MCF 10A (cell line): ENCODE measurements at regions of chr22 and their contacts with region 1.

Region 1: DNA sequence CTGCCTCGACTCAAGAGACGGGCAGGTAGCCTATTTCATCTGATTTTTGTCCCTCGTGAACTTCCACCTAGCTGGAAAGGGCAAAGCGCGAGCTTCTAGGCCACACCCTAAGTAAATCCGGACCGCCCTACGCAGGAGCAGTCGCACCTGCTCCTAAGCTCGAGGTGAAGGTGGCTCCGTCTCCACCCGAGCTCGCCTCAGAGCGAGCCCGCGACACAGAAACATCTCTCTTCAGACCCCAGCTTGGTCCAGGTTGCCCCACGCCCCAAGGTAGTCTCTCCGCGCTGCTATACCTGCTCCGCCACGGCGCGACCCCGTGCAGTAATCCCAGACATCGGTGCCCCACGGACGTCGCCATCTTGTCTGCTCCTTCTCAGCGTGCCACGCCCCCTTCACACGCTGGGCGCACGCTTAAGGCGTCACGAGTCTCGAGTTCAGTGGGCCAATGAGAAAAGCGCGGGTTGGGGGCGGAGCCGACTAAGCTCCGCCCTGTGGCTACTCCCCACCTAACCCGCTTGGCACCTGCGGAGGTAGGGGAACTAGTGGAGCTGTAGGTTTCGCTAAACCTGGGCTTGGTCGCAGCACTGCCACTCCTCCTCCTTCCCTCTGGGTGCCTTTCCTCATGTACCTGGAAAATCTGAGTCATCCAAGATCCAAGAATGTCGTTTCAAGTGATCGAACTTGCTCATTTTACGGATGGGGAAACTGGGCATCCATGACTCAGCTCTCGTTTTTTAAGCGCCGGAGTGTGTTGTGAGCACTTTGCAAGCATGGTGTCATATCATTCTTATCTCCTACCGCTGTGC is at the start of gene PISD:
- DNase-seq: peak; percentile 98
- H3K4me3 Mint-ChIP-seq: peak within 1 kb of the TSS; percentile 100
- H3K27ac Mint-ChIP-seq: peak within 1 kb of the TSS; percentile 100
- H3K4me1 Mint-ChIP-seq: peaks cover 19% of the 10 kb centered on the region
- H3K27me3 Mint-ChIP-seq: no peaks in the 10 kb centered on the region
- CTCF ChIP-seq: no peak
- total RNA-seq, gene PISD: 38.3 and 48.2 TPM in 2 replicates

Region 2: GRCh38 chr22:31439808-31440207 is 222.2 kb before region 1 on chr22:
- CTCF ChIA-PET with region 1: no interaction called
- POLR2A ChIA-PET with region 1: no interaction called
- intact Hi-C with region 1: no loop called
- DNase-seq: no peak
- H3K4me3 Mint-ChIP-seq: no peak overlapping the region
- H3K27ac Mint-ChIP-seq: no peak overlapping the region
- H3K4me1 Mint-ChIP-seq: no peaks in the 10 kb centered on the region
- H3K27me3 Mint-ChIP-seq: no peaks in the 10 kb centered on the region
- CTCF ChIP-seq: no peak

Region 3: GRCh38 chr22:31630331-31631329 is 31.4 kb before region 1 on chr22:
- CTCF ChIA-PET with region 1: interaction called, 5 read pairs
- POLR2A ChIA-PET with region 1: interaction called, 32 read pairs
- intact Hi-C with region 1: no loop called
- DNase-seq: peak; percentile 70
- H3K4me3 Mint-ChIP-seq: peak overlapping the region; percentile 75
- H3K27ac Mint-ChIP-seq: no peak overlapping the region
- H3K4me1 Mint-ChIP-seq: peaks cover 19% of the 10 kb centered on the region
- H3K27me3 Mint-ChIP-seq: no peaks in the 10 kb centered on the region
- CTCF ChIP-seq: no peak

Region 4: GRCh38 chr22:31646186-31647089 is 15.6 kb before region 1 on chr22:
- CTCF ChIA-PET with region 1: interaction called, 4 read pairs
- POLR2A ChIA-PET with region 1: interaction called, 107 read pairs
- intact Hi-C with region 1: no loop called
- DNase-seq: peak; percentile 87
- H3K4me3 Mint-ChIP-seq: peak overlapping the region; percentile 38
- H3K27ac Mint-ChIP-seq: peak overlapping the region; percentile 91
- H3K4me1 Mint-ChIP-seq: peaks cover 15% of the 10 kb centered on the region
- H3K27me3 Mint-ChIP-seq: no peaks in the 10 kb centered on the region
- CTCF ChIP-seq: no peak

Region 5: DNA sequence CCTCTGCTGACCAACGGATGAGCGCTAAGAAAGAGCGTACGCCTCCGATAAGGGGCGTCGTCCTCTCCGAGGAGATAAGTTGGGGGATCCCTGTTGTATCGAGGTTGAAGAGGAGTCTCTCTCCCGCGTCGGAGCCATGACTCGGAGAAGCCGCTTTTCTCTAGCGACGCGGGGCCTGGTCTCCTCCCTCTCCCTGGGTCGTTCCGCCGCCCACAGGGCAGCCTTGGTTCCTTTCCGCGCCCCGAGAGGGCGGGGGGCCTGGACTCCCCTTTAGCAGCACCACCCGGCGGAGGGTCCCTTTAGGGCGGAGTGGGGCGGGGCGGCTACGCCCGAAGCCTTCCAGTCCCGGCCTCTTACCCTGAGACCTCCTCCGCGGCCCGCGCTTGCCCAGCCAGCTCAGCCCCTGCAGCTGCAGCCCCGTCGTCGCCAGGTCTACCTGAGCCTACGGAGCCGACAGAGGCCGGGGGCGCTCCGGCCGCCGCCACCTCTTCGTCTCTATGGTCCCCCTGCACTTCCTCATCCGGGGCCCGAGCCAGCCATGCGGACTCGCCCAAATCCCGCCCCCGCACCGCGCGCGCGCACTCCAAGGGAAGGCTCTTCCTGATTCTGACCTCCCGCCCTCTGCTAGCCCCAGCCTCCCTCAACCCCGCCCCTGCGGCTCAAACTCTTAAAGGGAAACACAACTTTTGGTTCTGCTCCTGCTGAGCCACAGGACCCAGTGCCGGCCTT is 87.7 kb after region 1 on chr22 and contains the start of gene PRR14L:
- CTCF ChIA-PET with region 1: interaction called, 3 read pairs
- POLR2A ChIA-PET with region 1: interaction called, 80 read pairs
- intact Hi-C with region 1: loop called (anchors 5 kb)
- DNase-seq: peak; percentile 97
- H3K4me3 Mint-ChIP-seq: peak within 1 kb of the TSS; percentile 80
- H3K27ac Mint-ChIP-seq: peak within 1 kb of the TSS; percentile 90
- H3K4me1 Mint-ChIP-seq: peaks cover 32% of the 10 kb centered on the region
- H3K27me3 Mint-ChIP-seq: no peaks in the 10 kb centered on the region
- CTCF ChIP-seq: no peak
- total RNA-seq, gene PRR14L: 37.4 and 55.0 TPM in 2 replicates

Region 6: DNA sequence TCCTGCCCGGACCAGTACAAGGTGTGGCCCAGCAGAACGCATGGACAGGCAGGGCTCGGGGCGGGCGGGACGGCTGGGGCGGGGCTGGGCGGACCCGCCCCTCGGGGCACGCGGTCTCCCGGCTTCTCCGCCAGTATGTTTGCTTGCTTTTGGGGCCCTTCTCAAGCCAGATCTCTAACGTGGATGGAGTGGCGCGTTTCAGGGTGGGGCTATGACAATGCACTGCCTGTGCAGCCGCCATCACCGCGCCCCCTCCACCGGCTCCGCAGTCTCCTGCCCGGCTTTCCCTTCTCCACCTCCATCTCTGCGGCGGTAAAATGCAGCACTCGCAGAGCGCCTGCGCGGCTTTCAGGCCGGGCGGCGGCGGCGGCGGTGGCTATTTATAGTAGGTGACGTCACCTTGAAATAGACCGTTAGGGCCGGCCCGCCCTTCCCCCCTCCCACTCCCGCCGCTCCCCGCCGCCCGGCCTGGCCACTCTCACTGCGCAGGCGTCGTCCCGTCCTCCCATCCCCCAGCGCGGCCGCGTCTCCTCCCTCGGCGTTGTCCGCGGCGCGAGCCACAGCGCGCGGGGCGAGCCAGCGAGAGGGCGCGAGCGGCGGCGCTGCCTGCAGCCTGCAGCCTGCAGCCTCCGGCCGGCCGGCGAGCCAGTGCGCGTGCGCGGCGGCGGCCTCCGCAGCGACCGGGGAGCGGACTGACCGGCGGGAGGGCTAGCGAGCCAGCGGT is 282.1 kb after region 1 on chr22 and contains the start of gene YWHAH:
- CTCF ChIA-PET with region 1: interaction called, 9 read pairs
- POLR2A ChIA-PET with region 1: interaction called, 31 read pairs
- intact Hi-C with region 1: loop called (anchors 1 kb)
- DNase-seq: peak; percentile 92
- H3K4me3 Mint-ChIP-seq: no peak within 1 kb of the TSS
- H3K27ac Mint-ChIP-seq: peak within 1 kb of the TSS; percentile 55
- H3K4me1 Mint-ChIP-seq: peaks cover 6% of the 10 kb centered on the region
- H3K27me3 Mint-ChIP-seq: no peaks in the 10 kb centered on the region
- CTCF ChIP-seq: no peak
- total RNA-seq, gene YWHAH: 64.2 and 79.9 TPM in 2 replicates

Region 7: DNA sequence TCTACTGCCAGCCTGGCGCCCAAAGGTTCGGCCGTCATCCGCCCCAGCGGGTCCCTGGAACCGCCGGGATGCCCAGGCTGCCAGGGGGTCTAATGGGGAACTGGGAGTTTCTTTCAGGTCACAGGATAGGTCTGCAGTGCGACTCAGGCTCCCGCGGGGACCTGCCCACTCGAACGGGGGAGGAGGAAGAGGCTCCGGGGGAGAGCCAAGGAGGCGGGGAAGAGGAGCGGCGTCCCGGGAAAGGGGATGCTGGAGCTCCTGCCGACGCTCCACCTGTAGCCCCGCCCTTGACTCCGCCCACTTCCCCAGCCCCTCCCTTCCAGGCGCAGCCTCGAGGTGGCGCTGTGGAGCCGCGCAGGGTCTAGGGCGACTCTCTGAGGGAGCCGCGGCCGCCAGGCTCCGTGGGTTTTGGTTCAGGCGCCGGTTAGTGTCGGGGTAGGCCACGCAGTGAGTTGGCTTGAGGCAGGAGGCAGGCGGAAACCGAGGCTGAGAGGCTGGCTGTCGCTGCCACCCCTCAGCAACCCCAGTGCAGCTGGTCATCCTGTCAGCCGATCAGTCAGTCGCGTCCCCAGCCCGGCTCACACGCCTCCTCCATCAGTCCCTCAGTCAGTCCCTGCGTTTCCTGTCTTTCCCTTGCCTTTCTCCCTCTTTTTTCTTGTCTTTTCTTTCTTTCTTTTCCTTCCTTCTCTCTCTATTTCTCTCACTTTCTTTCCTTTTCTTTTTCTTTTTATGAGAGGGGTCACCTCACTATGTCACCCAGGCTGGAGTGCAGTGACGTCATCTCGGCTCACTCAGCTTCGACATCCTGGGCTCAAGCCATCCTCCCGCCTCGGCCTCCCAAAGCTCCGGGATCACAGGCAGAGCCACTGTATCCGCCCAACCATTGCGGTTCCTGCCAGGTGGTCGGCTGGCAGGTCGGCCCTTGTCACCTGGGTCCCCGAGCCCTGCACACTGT is 308.7 kb after region 1 on chr22:
- CTCF ChIA-PET with region 1: interaction called, 8 read pairs
- POLR2A ChIA-PET with region 1: interaction called, 10 read pairs
- intact Hi-C with region 1: loop called (anchors 1 kb)
- DNase-seq: peak; percentile 88
- H3K4me3 Mint-ChIP-seq: peak overlapping the region; percentile 82
- H3K27ac Mint-ChIP-seq: peak overlapping the region; percentile 71
- H3K4me1 Mint-ChIP-seq: peaks cover 6% of the 10 kb centered on the region
- H3K27me3 Mint-ChIP-seq: no peaks in the 10 kb centered on the region
- CTCF ChIP-seq: peak; percentile 94

Region 8: GRCh38 chr22:32020117-32020516 is 358.1 kb after region 1 on chr22:
- CTCF ChIA-PET with region 1: no interaction called
- POLR2A ChIA-PET with region 1: no interaction called
- intact Hi-C with region 1: no loop called
- DNase-seq: peak; percentile 96
- H3K4me3 Mint-ChIP-seq: no peak overlapping the region
- H3K27ac Mint-ChIP-seq: no peak overlapping the region
- H3K4me1 Mint-ChIP-seq: peaks cover 18% of the 10 kb centered on the region
- H3K27me3 Mint-ChIP-seq: peaks cover 15% of the 10 kb centered on the region
- CTCF ChIP-seq: no peak